ENCODE measurements at regions of chr7 and their contacts with region 1.

Region 1: DNA sequence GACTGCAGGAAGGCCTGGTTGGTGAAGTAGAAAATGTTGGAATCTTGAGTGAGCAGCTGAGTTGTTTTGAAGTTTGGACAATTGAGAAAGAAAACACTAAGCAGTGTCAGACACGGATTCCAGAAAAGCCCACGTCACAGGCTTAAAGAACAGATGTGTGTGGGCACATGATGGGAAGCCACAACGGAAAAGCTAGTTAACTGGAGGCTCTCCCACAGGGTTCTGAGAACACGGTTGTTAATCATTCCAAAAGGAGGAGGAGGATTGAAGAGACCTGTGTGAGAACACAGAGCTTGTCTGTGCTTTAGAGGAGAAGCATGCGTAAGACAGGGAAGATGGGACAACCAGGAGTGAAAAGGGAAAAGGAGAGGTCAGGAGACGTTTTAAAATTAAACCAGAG is 42.6 kb downstream of the SHH start:
- DNase-seq: no peak
- ATAC-seq: no peak
- H3K4me3 ChIP-seq: no peak overlapping the region
- H3K4me3 Mint-ChIP-seq: no peak overlapping the region
- H3K27ac ChIP-seq: no peak overlapping the region
- H3K27ac Mint-ChIP-seq: peak overlapping the region in 1 of 9 donors; percentile 52
- H3K4me1 ChIP-seq: peaks cover 4 to 6% of the 10 kb centered on the region in 2 donors
- H3K4me1 Mint-ChIP-seq: peaks cover 4 to 27% (median 11%) of the 10 kb centered on the region in 7 donors
- H3K27me3 ChIP-seq: no peaks in the 10 kb centered on the region
- H3K27me3 Mint-ChIP-seq: no peaks in the 10 kb centered on the region

Region 2: DNA sequence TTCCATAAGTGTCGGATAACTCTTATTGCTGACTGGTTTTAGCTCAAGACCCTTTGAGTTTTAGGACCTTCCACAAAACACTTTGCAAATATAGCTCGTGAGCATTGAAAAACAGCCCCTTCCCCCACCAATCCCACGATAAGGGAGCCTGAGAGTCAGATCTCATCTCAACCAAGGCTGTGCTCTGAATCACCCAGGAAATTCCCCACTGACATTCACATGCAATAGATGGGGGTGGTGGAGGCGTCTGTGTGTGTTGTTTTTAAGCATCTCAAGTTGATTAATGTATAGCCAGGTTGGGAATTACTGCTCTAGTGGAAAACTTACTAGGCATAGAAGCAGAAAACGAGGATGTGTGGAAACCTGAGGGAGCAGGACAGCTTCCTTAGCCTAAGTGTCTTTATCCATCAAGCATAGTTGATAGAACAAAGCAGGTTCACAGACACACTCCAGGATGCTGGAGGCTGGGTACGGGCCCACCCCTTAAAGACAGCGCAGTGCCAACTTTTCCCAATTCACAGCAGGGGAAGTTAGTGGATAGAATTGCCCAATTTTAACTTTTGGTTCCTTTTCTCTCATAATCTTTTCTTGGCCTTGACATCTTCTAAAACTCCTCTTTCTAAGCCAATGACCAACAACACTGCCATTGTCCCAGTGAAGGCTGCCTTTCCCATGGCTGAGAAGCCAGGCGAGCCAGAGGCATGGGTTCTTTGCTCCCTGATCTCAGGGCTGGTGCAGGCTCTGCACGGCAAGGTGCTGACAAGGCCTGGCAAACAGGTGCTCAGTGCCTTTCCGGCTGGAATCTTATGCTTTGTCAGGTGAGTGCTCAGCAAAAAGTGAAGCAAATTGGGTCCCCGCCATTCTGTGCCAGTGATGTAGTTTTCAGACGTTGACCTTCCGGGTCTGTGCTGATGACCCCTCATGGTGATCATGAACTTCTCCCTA is 570.5 kb before region 1 on chr7:
- CTCF ChIA-PET with region 1: no interaction called
- POLR2A ChIA-PET with region 1: no interaction called
- intact Hi-C with region 1: no loop called
- DNase-seq: peak in 1 of 9 donors; percentile 59
- ATAC-seq: no peak
- H3K4me3 ChIP-seq: no peak overlapping the region
- H3K4me3 Mint-ChIP-seq: no peak overlapping the region
- H3K27ac ChIP-seq: no peak overlapping the region
- H3K27ac Mint-ChIP-seq: no peak overlapping the region
- H3K4me1 ChIP-seq: no peaks in the 10 kb centered on the region
- H3K4me1 Mint-ChIP-seq: peaks cover 0 to 18% (median 0%) of the 10 kb centered on the region in 7 donors
- H3K27me3 ChIP-seq: no peaks in the 10 kb centered on the region
- H3K27me3 Mint-ChIP-seq: peaks cover 0 to 10% (median 3%) of the 10 kb centered on the region in 5 donors

Region 3: GRCh38 chr7:155685070-155685790 is 84.5 kb before region 1 on chr7:
- CTCF ChIA-PET with region 1: no interaction called
- POLR2A ChIA-PET with region 1: no interaction called
- intact Hi-C with region 1: loop called in 1 of 2 experiments (anchors 5 kb)
- DNase-seq: peak in 4 of 9 donors; percentile 4 to 16 (median 10)
- ATAC-seq: peak; percentile 48
- H3K4me3 ChIP-seq: no peak overlapping the region
- H3K4me3 Mint-ChIP-seq: peak overlapping the region; percentile 8 to 68 (median 45)
- H3K27ac ChIP-seq: peak overlapping the region; percentile 1
- H3K27ac Mint-ChIP-seq: peak overlapping the region; percentile 1 to 74 (median 19)
- H3K4me1 ChIP-seq: no peaks in the 10 kb centered on the region
- H3K4me1 Mint-ChIP-seq: peaks cover 32 to 83% (median 78%) of the 10 kb centered on the region in 7 donors
- H3K27me3 ChIP-seq: no peaks in the 10 kb centered on the region
- H3K27me3 Mint-ChIP-seq: no peaks in the 10 kb centered on the region

Region 4: GRCh38 chr7:156074982-156075615 is 305.4 kb after region 1 on chr7:
- CTCF ChIA-PET with region 1: no interaction called
- POLR2A ChIA-PET with region 1: no interaction called
- intact Hi-C with region 1: no loop called
- DNase-seq: no peak
- ATAC-seq: no peak
- H3K4me3 ChIP-seq: no peak overlapping the region
- H3K4me3 Mint-ChIP-seq: no peak overlapping the region
- H3K27ac ChIP-seq: no peak overlapping the region
- H3K27ac Mint-ChIP-seq: no peak overlapping the region
- H3K4me1 ChIP-seq: no peaks in the 10 kb centered on the region
- H3K4me1 Mint-ChIP-seq: peaks cover 0 to 4% (median 0%) of the 10 kb centered on the region in 7 donors
- H3K27me3 ChIP-seq: no peaks in the 10 kb centered on the region
- H3K27me3 Mint-ChIP-seq: peaks cover 0 to 11% (median 0%) of the 10 kb centered on the region in 5 donors

Region 5: GRCh38 chr7:156184164-156184563 is 414.5 kb after region 1 on chr7:
- CTCF ChIA-PET with region 1: no interaction called
- POLR2A ChIA-PET with region 1: no interaction called
- intact Hi-C with region 1: no loop called
- DNase-seq: no peak
- ATAC-seq: no peak
- H3K4me3 ChIP-seq: no peak overlapping the region
- H3K4me3 Mint-ChIP-seq: no peak overlapping the region
- H3K27ac ChIP-seq: no peak overlapping the region
- H3K27ac Mint-ChIP-seq: no peak overlapping the region
- H3K4me1 ChIP-seq: no peaks in the 10 kb centered on the region
- H3K4me1 Mint-ChIP-seq: no peaks in the 10 kb centered on the region
- H3K27me3 ChIP-seq: no peaks in the 10 kb centered on the region
- H3K27me3 Mint-ChIP-seq: peaks cover 0 to 9% (median 0%) of the 10 kb centered on the region in 5 donors

Region 6: GRCh38 chr7:156437998-156438397 is 668.3 kb after region 1 on chr7:
- CTCF ChIA-PET with region 1: no interaction called
- POLR2A ChIA-PET with region 1: no interaction called
- intact Hi-C with region 1: no loop called
- DNase-seq: no peak
- ATAC-seq: no peak
- H3K4me3 ChIP-seq: no peak overlapping the region
- H3K4me3 Mint-ChIP-seq: no peak overlapping the region
- H3K27ac ChIP-seq: no peak overlapping the region
- H3K27ac Mint-ChIP-seq: no peak overlapping the region
- H3K4me1 ChIP-seq: no peaks in the 10 kb centered on the region
- H3K4me1 Mint-ChIP-seq: peaks cover 0 to 2% (median 0%) of the 10 kb centered on the region in 7 donors
- H3K27me3 ChIP-seq: no peaks in the 10 kb centered on the region
- H3K27me3 Mint-ChIP-seq: peaks cover 0 to 49% (median 20%) of the 10 kb centered on the region in 5 donors